BJ (cell line): ENCODE measurements at regions of chr3 and their contacts with region 1.

Region 1: GRCh38 chr3:196603683-196604082 is 35.2 kb downstream of the FBXO45 start:
- DNase-seq: no peak
- H3K4me3 ChIP-seq: no peak overlapping the region
- H3K27me3 ChIP-seq: peaks cover 2% of the 10 kb centered on the region
- CTCF ChIP-seq: no peak

Region 2: DNA sequence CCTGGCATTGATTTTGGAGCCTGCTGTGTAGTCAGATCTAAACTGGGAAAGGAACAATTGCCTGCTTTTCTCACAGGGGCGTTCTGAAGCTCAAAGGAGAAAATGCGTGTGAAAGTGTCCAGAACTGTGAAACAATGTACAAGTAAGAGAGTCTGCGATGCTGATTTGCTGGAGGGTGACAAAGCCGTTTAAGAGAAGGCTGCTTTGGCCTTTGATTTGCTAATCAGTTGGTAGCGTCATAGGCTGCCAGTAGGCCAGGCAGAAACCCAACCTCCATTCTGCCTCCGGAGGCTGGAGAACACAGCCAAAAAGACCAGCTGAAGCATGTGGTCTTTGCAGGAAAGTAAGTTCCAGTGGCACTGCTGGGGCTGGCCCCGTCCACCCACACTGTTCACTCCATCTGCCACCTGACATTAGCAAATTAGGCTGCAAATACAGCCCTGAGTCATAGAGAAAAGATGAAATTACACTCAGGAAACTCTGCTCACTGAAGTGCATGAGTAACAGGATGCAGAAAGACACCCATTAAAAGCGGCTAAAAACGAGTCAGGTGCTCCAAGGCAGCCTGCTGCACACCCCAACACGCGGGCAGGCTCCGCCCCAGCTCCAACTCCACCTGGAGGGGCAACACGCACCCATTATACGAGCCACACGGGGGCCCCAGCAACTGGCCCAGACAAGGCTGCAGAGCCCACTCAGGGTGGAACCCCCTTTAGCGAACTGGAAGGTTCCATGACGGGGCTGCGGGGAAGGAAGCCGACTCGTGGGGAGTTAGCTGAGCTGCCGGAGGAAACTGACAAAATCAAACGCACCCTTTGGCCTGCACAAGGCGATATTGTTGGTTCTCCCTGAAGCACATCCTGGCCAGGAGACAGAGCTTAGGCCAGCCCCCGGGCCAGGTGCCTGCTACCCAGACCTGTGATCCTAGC is 424.0 kb before region 1 on chr3:
- CTCF ChIA-PET with region 1: no interaction called
- POLR2A ChIA-PET with region 1: interaction called, 10 read pairs
- DNase-seq: no peak
- H3K4me3 ChIP-seq: no peak overlapping the region
- H3K27me3 ChIP-seq: 0 out of 2 replicates have a peak, but pooled peaks cover 1% of the 10 kb centered on the region
- CTCF ChIP-seq: no peak

Region 3: DNA sequence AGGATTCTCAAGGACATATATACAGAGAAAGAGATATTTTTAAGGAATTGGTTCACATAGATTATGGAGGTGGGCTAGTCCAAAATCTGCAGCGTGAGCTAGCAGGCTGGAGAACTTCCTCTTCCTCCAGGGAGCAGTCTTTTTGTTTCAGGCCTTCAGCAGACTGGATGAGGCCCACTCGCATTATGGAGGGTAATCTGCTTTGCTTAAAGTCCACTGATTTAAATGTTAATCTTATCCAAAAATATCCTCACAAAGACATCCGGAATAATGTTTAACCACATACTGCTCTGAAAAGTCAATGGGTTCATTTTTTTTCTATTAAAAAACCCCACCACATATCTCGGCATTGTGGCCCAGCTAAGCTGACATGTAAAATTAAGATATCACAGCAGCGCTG is 13.6 kb after region 1 on chr3:
- CTCF ChIA-PET with region 1: no interaction called
- POLR2A ChIA-PET with region 1: no interaction called
- DNase-seq: no peak
- H3K4me3 ChIP-seq: no peak overlapping the region
- H3K27me3 ChIP-seq: no peaks in the 10 kb centered on the region
- CTCF ChIP-seq: no peak

Region 4: GRCh38 chr3:196757876-196758739 is 154.4 kb after region 1 on chr3:
- CTCF ChIA-PET with region 1: no interaction called
- POLR2A ChIA-PET with region 1: no interaction called
- DNase-seq: no peak
- H3K4me3 ChIP-seq: no peak overlapping the region
- H3K27me3 ChIP-seq: no peaks in the 10 kb centered on the region
- CTCF ChIP-seq: no peak

Region 5: GRCh38 chr3:196932600-196932999 is 328.9 kb after region 1 on chr3:
- CTCF ChIA-PET with region 1: no interaction called
- POLR2A ChIA-PET with region 1: no interaction called
- DNase-seq: no peak
- H3K4me3 ChIP-seq: no peak overlapping the region
- H3K27me3 ChIP-seq: no peaks in the 10 kb centered on the region
- CTCF ChIP-seq: no peak

Region 6: DNA sequence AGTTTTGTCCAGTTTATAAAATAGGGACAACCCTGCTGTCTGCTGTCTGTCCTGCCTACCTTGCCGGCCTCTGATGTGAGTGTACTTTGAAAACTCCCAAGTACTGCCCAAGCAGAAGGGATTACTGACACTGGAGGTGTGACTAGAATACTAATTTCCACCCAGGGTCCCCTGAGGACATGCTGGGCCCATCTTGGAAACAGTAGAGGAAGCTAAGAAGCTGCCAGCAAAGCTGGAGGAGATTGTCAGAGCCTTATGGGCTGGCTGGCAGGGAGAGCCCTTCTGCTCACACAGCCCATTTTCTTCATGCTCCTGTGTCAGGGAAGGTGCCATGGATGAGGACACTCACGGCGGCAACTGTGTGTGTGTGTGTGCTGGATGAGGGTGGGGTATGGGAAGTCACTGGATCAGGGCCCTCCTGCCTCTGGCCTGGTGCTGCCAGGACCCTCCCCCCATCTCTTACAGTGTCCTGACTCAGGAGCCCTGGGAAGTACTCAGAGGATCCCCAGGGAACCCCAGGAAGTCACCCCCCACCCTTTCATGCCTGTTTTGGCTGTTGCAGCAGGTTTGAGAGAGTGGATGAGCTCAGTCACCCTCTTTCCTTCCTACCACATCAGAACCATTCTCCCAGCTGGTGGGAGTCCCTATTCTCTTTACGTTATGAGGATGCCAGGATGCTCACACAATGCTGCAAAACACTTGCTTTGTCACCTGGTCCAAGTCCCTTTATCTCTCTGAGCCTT is 892.9 kb after region 1 on chr3:
- CTCF ChIA-PET with region 1: no interaction called
- POLR2A ChIA-PET with region 1: interaction called, 13 read pairs
- DNase-seq: no peak
- H3K4me3 ChIP-seq: no peak overlapping the region
- H3K27me3 ChIP-seq: no peaks in the 10 kb centered on the region
- CTCF ChIP-seq: no peak